Activated CD4-positive, alpha-beta memory T cell treated with anti-CD3 and anti-CD28 coated beads for 36 hours (primary cell): ENCODE measurements at regions of chr9 and their contacts with region 1.

Region 1: GRCh38 chr9:76451234-76451633 is 7.7 kb upstream of the GCNT1 start:
- DNase-seq: no peak
- H3K4me3 Mint-ChIP-seq: no peak overlapping the region
- H3K27ac Mint-ChIP-seq: no peak overlapping the region
- H3K4me1 Mint-ChIP-seq: peaks cover 6% of the 10 kb centered on the region
- H3K27me3 Mint-ChIP-seq: no peaks in the 10 kb centered on the region

Region 2: DNA sequence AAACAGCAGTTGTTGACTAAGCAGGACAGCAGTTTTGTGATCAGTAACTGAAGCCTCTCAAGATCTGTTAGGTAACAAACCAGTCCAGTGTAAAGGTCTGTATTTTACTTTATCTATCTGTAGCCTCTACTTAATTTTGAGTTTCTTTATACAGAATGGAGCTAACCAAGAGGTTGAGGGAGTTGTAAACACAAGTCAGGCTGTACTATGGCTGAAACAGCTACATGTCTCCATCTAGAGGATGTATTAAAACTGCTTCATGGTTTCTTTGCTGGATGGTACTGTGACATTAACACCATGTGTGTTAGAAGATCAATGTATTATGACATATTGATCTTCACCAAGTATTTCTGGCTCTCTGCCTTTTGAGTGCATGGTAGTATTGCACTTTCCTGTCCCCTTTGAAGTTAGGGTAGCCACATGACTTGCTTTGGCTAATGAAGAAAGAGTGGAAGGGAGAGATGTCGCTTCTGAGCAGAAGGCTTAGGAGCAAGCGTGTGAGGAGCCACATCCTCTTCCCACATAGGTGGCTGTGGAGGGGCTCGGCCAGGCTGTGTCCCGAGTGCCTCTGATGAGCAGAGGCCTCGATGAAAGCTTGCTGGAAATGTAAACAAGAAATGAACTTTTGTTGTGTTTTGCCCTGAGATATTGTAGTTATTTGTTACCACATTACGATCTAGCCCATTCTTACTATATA is 207.4 kb after region 1 on chr9:
- CTCF ChIA-PET with region 1: interaction called, 37 read pairs
- POLR2A ChIA-PET with region 1: no interaction called
- intact Hi-C with region 1: loop called (anchors 1 kb)
- DNase-seq: no peak
- H3K4me3 Mint-ChIP-seq: no peak overlapping the region
- H3K27ac Mint-ChIP-seq: no peak overlapping the region
- H3K4me1 Mint-ChIP-seq: peaks cover 29% of the 10 kb centered on the region
- H3K27me3 Mint-ChIP-seq: peaks cover 1% of the 10 kb centered on the region